Activated CD8-positive, alpha-beta T cell treated with anti-CD3 and anti-CD28 coated beads, Interleukin-2, amount 10 ng/mL, durations not matched to agents 7 days and 5 days (primary cell): ENCODE measurements at regions of chr4 and their contacts with region 1.

Region 1: DNA sequence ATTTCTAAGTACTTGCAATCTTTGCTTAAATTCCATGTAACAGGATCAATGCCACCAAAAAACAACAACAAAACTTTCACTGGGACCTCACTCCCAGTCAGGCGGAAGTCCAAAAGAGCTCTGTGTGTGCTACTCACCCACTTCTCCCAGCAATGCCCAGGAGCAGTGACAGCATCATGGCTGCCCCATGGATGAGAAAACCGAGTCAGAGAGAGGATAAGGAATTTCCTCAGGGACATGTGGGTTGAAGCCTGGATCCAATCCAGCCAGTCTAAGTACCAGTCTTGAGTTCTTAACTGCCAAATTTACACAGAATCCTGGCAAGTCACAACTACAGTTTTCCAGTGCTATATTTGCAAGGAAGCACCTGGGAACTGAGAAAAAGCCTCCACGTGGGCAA is 64.5 kb downstream of the STX18 start:
- DNase-seq: no peak
- ATAC-seq: no peak
- H3K4me3 Mint-ChIP-seq: no peak overlapping the region
- H3K27ac Mint-ChIP-seq: no peak overlapping the region
- H3K4me1 Mint-ChIP-seq: peaks cover 3% of the 10 kb centered on the region
- H3K27me3 Mint-ChIP-seq: no peaks in the 10 kb centered on the region

Region 2: GRCh38 chr4:4488405-4489404 is 11.3 kb after region 1 on chr4:
- CTCF ChIA-PET with region 1: interaction called, 12 read pairs
- POLR2A ChIA-PET with region 1: no interaction called
- DNase-seq: peak; percentile 79
- ATAC-seq: peak; percentile 99
- H3K4me3 Mint-ChIP-seq: no peak overlapping the region
- H3K27ac Mint-ChIP-seq: no peak overlapping the region
- H3K4me1 Mint-ChIP-seq: peaks cover 10% of the 10 kb centered on the region
- H3K27me3 Mint-ChIP-seq: no peaks in the 10 kb centered on the region